ENCODE measurements at regions of chr14 and their contacts with region 1.

Region 1: DNA sequence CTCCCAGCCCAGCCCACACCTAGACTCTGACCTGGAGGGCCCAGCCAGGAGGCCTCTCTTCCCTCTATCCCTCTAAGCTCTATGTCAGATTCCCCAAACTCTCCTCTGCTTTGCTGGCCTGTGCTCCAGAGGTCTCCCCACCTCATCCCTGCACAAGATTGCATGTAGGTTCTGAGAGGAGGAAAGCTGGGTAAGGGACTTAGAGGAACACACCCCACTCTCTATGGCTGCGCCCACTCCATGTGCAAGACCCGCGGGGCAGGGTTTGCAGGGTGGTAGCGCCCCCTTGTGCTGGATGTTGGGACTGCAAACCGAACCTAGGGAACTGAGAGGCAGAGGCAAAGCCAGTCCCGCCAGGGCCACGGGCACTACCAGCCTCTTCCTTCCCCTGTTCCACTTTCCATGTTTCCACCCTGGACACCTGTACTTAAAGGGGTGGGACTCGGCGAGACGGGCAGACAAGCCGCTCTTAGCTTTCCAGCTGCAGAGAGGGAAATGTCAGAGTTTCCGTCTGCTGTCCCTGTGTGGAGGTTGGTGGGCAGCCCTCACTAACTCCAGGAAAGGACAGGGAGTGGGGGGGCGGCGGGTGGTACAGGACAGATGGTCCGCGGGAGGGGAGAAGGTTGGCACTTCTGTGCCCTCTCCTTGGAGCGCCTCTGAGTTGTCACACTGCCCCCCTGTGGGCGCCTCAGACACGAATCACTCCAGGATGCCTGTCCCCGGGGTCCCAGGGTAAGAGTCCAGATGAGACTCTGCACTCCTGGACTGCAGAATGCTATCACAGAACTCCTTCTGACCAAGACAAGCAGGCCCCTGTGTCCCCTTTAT is 16.8 kb downstream of the MMP14 start:
- DNase-seq: no peak
- H3K4me3 ChIP-seq: peak overlapping the region; percentile 56
- H3K27ac ChIP-seq: peak overlapping the region; percentile 52
- H3K27me3 ChIP-seq: no peaks in the 10 kb centered on the region
- CTCF ChIP-seq: peak; percentile 91

Region 2: GRCh38 chr14:22084393-22085281 is 768.5 kb before region 1 on chr14:
- CTCF ChIA-PET with region 1: no interaction called
- POLR2A ChIA-PET with region 1: no interaction called
- DNase-seq: peak; percentile 29
- H3K4me3 ChIP-seq: no peak overlapping the region
- H3K27ac ChIP-seq: no peak overlapping the region
- H3K27me3 ChIP-seq: no peaks in the 10 kb centered on the region
- CTCF ChIP-seq: peak; percentile 72

Region 3: GRCh38 chr14:22726012-22726411 is 127.1 kb before region 1 on chr14:
- CTCF ChIA-PET with region 1: no interaction called
- POLR2A ChIA-PET with region 1: no interaction called
- DNase-seq: no peak
- H3K4me3 ChIP-seq: no peak overlapping the region
- H3K27ac ChIP-seq: no peak overlapping the region
- H3K27me3 ChIP-seq: peaks cover 12% of the 10 kb centered on the region
- CTCF ChIP-seq: no peak

Region 4: GRCh38 chr14:22773162-22774010 is 79.8 kb before region 1 on chr14:
- CTCF ChIA-PET with region 1: interaction called, 24 read pairs
- POLR2A ChIA-PET with region 1: no interaction called
- DNase-seq: no peak
- H3K4me3 ChIP-seq: no peak overlapping the region
- H3K27ac ChIP-seq: no peak overlapping the region
- H3K27me3 ChIP-seq: no peaks in the 10 kb centered on the region
- CTCF ChIP-seq: no peak

Region 5: DNA sequence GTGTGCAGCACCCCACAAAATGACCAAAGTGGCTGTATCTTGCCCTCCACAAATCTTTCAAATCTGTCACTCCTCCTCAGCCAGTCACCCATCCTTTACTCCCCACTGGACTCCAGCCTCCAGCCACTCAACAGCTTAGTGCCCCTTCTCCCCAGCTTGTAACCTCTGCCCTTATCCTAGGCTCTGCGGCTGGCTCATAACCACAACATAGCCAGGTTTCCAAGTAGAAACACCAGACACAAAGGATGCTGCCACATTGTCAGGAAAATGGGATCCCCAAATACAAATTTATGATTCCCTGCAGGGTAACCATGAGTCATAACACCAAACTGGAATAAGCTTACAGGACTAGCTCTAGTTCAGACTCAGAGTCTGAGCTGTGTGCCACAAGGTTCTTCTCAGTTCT is 71.6 kb before region 1 on chr14:
- CTCF ChIA-PET with region 1: interaction called, 24 read pairs
- POLR2A ChIA-PET with region 1: no interaction called
- DNase-seq: no peak
- H3K4me3 ChIP-seq: no peak overlapping the region
- H3K27ac ChIP-seq: no peak overlapping the region
- H3K27me3 ChIP-seq: no peaks in the 10 kb centered on the region
- CTCF ChIP-seq: no peak

Region 6: GRCh38 chr14:22836301-22837113 is 16.6 kb before region 1 on chr14 and contains the start of gene MMP14:
- CTCF ChIA-PET with region 1: interaction called, 104 read pairs
- POLR2A ChIA-PET with region 1: interaction called, 76 read pairs
- DNase-seq: no peak
- H3K4me3 ChIP-seq: peak within 1 kb of the TSS; percentile 89
- H3K27ac ChIP-seq: peak within 1 kb of the TSS; percentile 94
- H3K27me3 ChIP-seq: no peaks in the 10 kb centered on the region
- CTCF ChIP-seq: peak; percentile 65
- polyA plus RNA-seq, gene MMP14: 365 and 448 TPM in 2 replicates

Region 7: DNA sequence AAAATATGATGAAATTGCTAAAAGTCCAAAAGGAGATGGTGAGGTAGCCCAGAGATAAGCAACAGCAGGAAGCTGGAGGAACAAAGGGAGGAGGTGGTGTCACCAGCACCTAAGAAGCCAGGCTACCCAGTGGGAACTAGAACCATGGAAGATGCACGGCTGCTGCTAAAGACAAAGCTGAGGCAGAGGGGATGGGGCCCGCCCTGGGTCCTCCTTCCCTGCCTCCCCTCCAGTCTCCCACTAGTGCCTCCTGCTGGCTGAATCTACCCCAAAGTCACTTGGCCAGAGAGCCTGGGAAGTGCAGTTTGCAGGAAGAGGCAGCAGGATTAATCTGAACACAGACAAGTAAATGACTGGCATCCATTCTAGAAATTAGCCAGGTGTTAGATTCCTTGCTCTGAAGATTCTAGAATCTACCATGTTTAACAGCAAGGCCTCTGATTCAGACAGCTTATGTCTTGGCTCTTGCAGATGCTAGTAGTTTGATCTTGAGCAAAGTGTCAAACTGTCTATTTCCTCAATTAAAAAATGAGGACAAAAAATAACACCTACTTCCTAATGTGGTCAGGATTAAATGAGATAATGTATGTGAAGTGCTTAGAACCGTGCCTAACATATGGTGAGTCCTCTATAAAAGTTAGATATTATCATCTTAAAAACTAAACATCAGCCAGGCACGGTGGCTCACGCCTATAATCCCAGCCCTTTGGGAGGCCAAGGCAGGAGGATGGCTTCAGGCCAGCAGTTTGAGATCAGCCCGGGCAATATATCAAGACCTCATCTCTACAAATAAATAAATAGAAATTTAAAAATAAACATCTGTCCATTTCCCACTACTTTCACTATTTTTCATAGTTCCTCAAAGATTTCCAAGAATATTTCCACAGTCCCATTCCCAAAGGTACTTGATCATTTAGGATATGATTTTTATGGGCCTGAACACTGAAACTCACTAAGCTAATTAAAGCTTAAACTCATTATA is 12.6 kb after region 1 on chr14:
- CTCF ChIA-PET with region 1: interaction called, 51 read pairs
- POLR2A ChIA-PET with region 1: interaction called, 4 read pairs
- DNase-seq: no peak
- H3K4me3 ChIP-seq: no peak overlapping the region
- H3K27ac ChIP-seq: no peak overlapping the region
- H3K27me3 ChIP-seq: no peaks in the 10 kb centered on the region
- CTCF ChIP-seq: no peak

Region 8: GRCh38 chr14:22872033-22872832 is 19.1 kb after region 1 on chr14:
- CTCF ChIA-PET with region 1: interaction called, 51 read pairs
- POLR2A ChIA-PET with region 1: no interaction called
- DNase-seq: peak; percentile 58
- H3K4me3 ChIP-seq: peak overlapping the region; percentile 80
- H3K27ac ChIP-seq: peak overlapping the region; percentile 91
- H3K27me3 ChIP-seq: no peaks in the 10 kb centered on the region
- CTCF ChIP-seq: peak; percentile 96